HepG2 (cell line): ENCODE measurements at regions of chr6 and their contacts with region 1.

Region 1: GRCh38 chr6:37110500-37111461 is 59.2 kb upstream of the PIM1 start:
- DNase-seq: peak; percentile 96
- ATAC-seq: peak; percentile 82
- H3K4me3 ChIP-seq: peak overlapping the region; percentile 20 to 45 (median 41); a peak in 5 of 6 replicates
- H3K27ac ChIP-seq: peak overlapping the region; percentile 76
- H3K4me1 ChIP-seq: peaks cover 79% of the 10 kb centered on the region
- H3K27me3 ChIP-seq: no peaks in the 10 kb centered on the region
- CTCF ChIP-seq: peak; percentile 9; the same call in 1 of the 2 replicates
- EP300 ChIP-seq: peak; percentile 61 to 95; a peak in 3 of 4 replicates
- POLR2A ChIP-seq: no peak
- RAD21 ChIP-seq: peak; percentile 10; the same call in 1 of the 2 replicates

Region 2: DNA sequence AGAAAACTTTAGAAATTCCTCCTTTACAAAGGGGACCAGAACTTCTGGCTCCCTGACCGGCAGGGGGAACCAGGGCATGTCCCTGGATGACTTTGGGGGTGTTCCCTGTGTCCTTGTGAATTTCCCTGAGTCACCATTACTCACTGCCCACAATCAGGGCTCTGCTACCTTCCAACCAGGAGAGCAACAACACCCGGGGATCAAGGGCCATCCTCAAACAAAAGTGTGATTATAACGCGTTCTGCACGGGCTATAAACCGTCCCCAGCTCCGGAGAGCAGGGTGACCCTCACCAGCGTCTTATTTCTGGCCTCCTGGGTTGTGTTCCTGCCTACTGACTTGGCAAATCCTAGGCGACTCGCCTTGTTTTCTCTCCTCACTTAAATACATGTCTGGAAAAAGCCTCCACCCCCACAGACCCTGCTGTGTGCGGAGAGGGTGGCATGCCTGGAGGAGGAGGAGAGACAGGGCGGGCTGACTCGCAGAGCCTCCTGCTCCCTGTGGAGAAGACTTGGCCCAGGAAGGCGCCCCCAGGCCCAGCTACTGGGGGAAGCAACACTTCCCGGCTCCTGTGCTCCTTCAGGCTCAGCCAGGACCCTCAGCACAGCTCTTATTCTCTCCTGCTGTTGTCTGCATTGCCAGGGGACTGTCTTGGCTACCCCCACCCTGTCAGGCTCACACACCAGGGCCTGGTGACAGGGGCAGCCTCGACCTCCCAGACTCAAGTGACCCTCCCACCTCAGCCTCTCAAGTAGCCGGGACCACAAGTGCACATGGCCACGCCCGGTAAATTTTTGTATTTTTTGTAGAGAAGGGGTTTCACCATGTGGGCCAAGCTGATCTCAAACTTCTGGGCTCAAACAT is 51.2 kb before region 1 on chr6:
- CTCF ChIA-PET with region 1: no interaction called
- POLR2A ChIA-PET with region 1: interaction called, 37 read pairs
- in situ Hi-C with region 1: no loop called
- intact Hi-C with region 1: no loop called
- DNase-seq: peak; percentile 99
- ATAC-seq: peak; percentile 91
- H3K4me3 ChIP-seq: peak overlapping the region; percentile 32 to 67 (median 44); a peak in 5 of 6 replicates
- H3K27ac ChIP-seq: peak overlapping the region; percentile 97
- H3K4me1 ChIP-seq: peaks cover 76% of the 10 kb centered on the region
- H3K27me3 ChIP-seq: no peaks in the 10 kb centered on the region
- CTCF ChIP-seq: peak; percentile 92
- EP300 ChIP-seq: peak; percentile 89 to 96; a peak in 3 of 4 replicates
- POLR2A ChIP-seq: peak in 1 of 2 experiments; percentile 85; a peak in 2 of 4 replicates
- RAD21 ChIP-seq: peak; percentile 96

Region 3: GRCh38 chr6:37125783-37126492 is 15.2 kb after region 1 on chr6:
- CTCF ChIA-PET with region 1: no interaction called
- POLR2A ChIA-PET with region 1: interaction called, 172 read pairs
- in situ Hi-C with region 1: no loop called
- intact Hi-C with region 1: no loop called
- DNase-seq: peak; percentile 75
- ATAC-seq: no peak
- H3K4me3 ChIP-seq: peak overlapping the region in 2 of 3 experiments; percentile 13 to 35; a peak in 4 of 6 replicates
- H3K27ac ChIP-seq: peak overlapping the region; percentile 95
- H3K4me1 ChIP-seq: peaks cover 95% of the 10 kb centered on the region
- H3K27me3 ChIP-seq: no peaks in the 10 kb centered on the region
- CTCF ChIP-seq: no peak
- EP300 ChIP-seq: peak in 1 of 2 experiments; percentile 92; a peak in 2 of 4 replicates
- POLR2A ChIP-seq: no peak
- RAD21 ChIP-seq: no peak

Region 4: DNA sequence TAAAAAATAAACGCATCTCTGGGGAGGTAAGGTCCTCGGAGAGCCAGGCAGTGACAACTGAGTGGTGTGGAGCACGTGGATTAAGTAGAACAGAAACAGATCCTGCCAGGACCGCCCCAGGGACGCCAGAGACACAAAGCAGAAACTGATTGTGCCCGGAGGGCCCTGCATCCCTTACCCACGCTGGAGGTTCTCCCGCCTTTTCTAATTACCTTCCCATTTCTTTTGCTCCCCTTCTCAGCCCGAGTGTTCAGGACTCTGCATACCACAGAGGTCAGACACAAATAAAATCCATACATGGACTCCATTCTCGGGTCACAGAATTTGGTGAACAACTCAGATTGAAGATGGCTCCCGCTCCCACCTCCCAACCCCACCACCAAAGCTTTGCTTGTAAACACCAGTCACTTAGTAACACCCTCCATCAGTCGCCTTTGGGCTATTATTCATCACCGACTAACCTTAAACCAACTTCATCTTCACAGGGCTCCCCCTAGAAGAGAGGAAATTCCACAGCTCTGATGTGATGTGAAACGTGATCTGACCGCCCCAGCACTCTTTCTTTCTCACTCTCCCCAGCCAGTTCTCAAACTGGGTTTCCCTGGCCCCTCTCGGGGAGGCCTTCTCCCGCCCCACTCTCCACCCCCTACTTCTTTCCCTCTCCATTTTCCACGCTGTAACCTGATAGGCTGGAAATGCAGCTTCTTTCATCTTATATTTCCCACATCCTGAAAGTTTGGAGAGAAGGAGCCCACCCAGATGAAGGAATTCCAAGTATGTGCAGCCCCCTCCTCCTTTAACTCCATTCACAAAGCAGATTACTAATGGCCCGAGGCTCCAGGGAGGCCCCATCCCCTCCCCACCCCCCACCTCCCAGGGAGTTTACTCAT is 26.7 kb after region 1 on chr6:
- CTCF ChIA-PET with region 1: no interaction called
- POLR2A ChIA-PET with region 1: interaction called, 172 read pairs
- in situ Hi-C with region 1: no loop called
- intact Hi-C with region 1: no loop called
- DNase-seq: peak; percentile 93
- ATAC-seq: peak; percentile 81
- H3K4me3 ChIP-seq: peak overlapping the region; percentile 58 to 71 (median 62)
- H3K27ac ChIP-seq: peak overlapping the region; percentile 92
- H3K4me1 ChIP-seq: peaks cover 82% of the 10 kb centered on the region
- H3K27me3 ChIP-seq: no peaks in the 10 kb centered on the region
- CTCF ChIP-seq: peak; percentile 16; the same call in 1 of the 2 replicates
- EP300 ChIP-seq: peak in 1 of 2 experiments; percentile 27; a peak in 1 of 4 replicates
- POLR2A ChIP-seq: peak; percentile 44 to 49
- RAD21 ChIP-seq: no peak

Region 5: DNA sequence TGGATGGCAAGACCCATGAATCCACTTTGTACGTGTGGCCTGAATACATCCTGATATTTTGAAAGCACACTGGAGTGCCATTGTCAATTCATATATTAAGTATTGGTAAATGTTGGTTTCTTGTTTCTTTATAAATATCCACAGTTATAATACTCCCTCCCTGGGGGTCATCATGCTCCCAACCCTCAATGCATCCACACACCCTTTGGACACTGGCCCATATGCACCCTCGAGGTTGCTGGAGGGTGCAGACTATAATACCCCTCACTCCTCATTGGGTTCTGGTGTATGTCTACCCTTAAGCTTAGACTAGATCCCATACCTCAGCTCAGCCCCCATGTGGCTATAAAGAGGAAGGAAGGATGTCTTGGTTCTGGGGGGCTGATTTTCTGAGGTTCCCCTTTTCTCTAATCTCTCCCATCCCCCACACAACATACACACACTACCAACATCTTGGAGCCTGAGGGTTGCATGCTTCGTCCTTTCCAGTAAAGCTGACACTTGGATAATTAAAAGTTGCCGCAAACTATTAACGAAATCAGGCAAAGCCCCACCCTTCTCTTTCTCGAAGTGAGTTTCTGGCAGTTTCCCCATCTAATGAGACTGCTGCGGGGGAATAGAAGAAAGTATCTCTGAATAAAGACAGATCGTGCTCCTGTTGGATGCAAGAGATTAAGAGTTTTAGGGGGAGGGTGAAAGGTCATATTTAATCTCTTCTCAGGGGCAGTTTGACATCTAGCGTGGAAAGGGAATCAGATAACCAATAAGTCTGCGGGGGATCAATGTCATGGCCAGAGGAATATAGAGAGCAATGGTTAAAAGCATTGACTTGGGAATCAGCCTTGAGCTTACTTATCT is 66.5 kb after region 1 on chr6:
- CTCF ChIA-PET with region 1: no interaction called
- POLR2A ChIA-PET with region 1: interaction called, 132 read pairs
- in situ Hi-C with region 1: no loop called
- intact Hi-C with region 1: no loop called
- DNase-seq: no peak
- ATAC-seq: peak; percentile 73
- H3K4me3 ChIP-seq: no peak overlapping the region
- H3K27ac ChIP-seq: no peak overlapping the region
- H3K4me1 ChIP-seq: peaks cover 24% of the 10 kb centered on the region
- H3K27me3 ChIP-seq: no peaks in the 10 kb centered on the region; a peak in 1 of 5 replicates
- CTCF ChIP-seq: peak; percentile 41
- EP300 ChIP-seq: no peak
- POLR2A ChIP-seq: no peak
- RAD21 ChIP-seq: no peak